ENCODE measurements at regions of chr22 and their contacts with region 1.

Region 1: GRCh38 chr22:29202212-29203192 is 3.2 kb upstream of the EMID1 start:
- DNase-seq: peak; percentile 28
- H3K4me3 Mint-ChIP-seq: no peak overlapping the region
- H3K27ac Mint-ChIP-seq: no peak overlapping the region
- H3K4me1 Mint-ChIP-seq: no peaks in the 10 kb centered on the region
- H3K27me3 Mint-ChIP-seq: peaks cover 67% of the 10 kb centered on the region
- CTCF ChIP-seq: peak; percentile 27

Region 2: DNA sequence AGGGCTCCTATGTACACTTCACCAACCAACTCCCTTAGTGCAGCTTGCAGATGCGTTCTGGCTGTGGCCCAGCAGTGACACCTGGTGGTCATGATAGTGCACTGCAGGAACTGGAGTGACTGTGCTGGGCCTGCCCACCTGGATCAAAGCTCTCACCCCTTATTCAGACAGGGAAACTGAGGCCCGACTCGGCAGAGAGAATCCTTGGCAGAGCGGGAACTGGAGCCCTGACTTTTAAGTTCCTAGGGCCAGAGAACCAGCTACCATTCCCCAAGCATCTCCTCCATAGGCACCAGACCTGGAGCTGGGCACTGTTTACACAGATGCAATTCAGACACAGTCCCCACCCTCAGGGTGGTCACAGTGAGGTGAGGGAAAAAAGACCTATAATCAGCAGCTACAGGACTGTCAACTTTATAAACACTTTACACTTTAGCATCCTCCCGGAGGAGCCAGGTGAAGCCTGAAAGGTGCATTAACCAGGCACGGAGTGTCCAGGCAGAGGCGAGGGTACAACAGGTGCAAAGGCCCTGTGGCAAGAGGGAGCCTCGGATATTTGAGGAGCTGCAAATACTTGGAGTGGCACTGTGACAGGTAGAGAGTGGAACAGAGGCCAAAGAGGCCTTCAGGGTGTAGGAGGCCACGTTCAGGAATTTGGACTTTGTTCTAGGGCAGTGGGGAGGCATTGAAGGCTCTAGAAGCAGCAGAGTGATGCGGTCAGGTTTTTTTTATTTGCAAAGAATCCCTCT is 43.3 kb after region 1 on chr22:
- CTCF ChIA-PET with region 1: interaction called, 3 read pairs
- intact Hi-C with region 1: loop called (anchors 2 kb)
- DNase-seq: peak; percentile 77
- H3K4me3 Mint-ChIP-seq: no peak overlapping the region
- H3K27ac Mint-ChIP-seq: no peak overlapping the region
- H3K4me1 Mint-ChIP-seq: peaks cover 9% of the 10 kb centered on the region
- H3K27me3 Mint-ChIP-seq: peaks cover 42% of the 10 kb centered on the region
- CTCF ChIP-seq: peak; percentile 90

Measured in Calu3 (cell line).